Ascending aorta (tissue), 2 donors: ENCODE measurements at regions of chr9 and their contacts with region 1.

Region 1: DNA sequence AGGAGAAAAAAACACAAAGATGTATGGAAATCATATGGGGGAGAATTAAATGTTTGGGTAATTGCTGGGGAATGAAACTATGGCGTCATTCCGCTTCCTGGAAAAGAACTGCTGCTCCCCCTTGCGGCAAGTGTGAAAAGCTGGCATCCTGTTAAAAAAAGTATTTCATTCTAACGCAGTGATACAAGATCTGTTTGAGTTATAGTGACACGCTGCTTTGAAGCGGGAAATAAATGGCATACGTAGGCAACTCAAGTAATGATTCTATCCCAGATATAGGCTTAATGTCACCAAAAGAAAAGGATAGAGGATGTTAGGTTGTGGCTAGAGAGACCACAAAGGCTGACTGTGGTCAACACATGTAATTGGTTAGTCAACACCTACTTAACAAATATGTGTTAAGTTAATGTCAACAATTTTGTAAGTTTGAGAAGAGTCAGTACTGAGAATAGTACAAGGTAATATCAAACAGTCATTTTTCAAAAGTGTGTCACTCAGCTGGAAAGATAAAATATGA is 70.2 kb upstream of the ALDH1A1 start:
- DNase-seq: peak in 1 of 2 donors; percentile 68
- H3K4me3 ChIP-seq: no peak overlapping the region
- H3K27ac ChIP-seq: no peak overlapping the region
- H3K4me1 ChIP-seq: no peaks in the 10 kb centered on the region
- H3K27me3 ChIP-seq: no peaks in the 10 kb centered on the region
- CTCF ChIP-seq: peak; percentile 79 to 86 (median 84)

Region 2: DNA sequence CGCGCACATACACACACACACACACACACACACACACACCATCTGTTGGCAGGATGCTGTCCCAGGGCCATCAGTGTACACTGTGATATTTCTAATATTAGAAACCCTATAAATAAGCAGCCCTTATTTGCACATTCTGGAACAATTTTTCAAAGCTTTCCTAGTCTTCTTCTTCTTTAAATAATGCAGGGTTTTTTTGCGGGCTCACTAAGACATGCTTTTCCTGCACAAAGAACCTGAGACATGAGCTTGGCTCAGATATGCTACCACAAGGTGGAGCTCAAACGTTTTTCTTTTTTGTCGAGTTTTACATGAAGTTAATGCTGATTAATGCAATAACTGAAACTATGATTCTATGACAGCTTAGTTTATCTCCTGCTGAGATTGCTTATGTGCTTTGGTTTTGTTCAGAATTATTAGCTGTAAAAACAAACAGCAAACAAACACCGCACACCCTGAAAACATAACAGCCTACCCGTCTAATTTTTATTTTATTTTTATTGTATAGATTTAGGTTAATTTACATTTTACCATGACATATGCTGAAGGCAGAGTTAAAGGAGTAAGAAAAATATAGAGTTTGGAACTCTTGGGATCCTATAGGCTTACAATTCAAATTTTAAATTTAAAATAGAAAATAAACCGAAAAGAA is 166.0 kb before region 1 on chr9:
- intact Hi-C with region 1: loop called (anchors 1 kb)
- DNase-seq: peak in 1 of 2 donors; percentile 73
- H3K4me3 ChIP-seq: no peak overlapping the region
- H3K27ac ChIP-seq: peak overlapping the region in 1 of 2 donors; percentile 36
- H3K4me1 ChIP-seq: peaks cover 0 to 9% of the 10 kb centered on the region in 2 donors
- H3K27me3 ChIP-seq: no peaks in the 10 kb centered on the region
- CTCF ChIP-seq: peak; percentile 58 to 74 (median 64)

Region 3: DNA sequence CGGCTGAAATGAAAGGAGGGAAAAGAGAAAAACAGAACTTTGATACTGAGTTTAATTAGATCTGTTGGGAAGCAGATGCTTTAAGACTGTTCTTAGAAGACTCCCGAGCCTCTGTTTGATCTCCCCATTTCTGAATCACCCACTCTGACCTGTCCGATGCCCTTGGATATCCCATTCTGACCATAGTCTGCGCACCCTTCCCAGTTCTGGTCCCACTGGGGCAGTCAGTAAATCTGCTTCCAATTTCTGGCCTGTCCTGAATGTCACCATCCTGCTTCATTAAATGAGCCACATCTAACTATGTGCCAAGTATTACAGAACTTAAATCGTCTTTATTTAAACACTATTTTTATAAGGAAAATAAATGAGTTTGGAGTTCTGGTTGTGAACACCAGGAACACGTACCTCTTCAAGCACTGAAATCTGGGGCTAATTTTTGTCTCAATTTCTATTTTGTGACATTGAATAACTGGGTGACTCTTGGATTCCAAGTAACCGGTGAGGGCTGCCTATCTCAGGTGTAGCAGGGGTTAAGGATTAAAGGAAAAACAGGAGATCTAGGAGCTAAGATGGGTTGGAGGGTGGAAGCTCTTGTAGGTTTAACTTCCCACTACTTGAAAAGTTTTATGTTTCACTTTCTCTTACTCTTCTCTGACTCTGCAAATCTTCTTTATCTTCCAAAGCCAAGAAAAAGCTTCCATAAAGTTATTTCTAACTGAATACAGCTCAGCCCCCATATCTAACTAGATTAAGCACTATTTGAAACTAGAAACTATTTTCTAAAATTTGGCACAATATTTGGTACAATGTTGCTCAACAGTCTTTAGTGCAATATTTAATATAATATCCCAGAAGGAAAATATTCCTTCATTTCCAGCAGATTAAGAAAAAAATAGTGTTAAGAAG is 110.4 kb before region 1 on chr9:
- intact Hi-C with region 1: loop called (anchors 2 kb)
- DNase-seq: no peak
- H3K4me3 ChIP-seq: peak overlapping the region in 1 of 2 donors; percentile 48
- H3K27ac ChIP-seq: peak overlapping the region; percentile 65 to 66
- H3K4me1 ChIP-seq: peaks cover 0 to 2% of the 10 kb centered on the region in 2 donors
- H3K27me3 ChIP-seq: no peaks in the 10 kb centered on the region
- CTCF ChIP-seq: no peak

Region 4: DNA sequence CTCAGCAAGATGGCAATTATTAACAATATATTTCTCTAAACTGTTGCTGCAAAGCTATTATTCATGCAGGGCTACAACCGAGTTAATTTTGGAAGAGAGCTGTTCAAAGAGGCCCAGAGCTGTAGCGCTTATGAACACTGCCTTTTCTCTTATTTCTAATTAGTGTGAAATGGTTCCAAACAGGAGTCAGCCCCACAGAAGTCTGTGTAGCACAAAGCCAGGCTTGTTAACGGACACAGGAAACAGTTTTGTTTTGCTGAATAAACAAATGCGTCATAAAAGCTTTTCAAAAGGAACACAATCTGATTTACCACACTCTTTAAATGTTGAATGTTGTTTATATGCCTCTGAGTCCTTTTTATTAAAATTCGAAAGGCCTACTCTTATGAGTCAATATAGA is 525.1 kb after region 1 on chr9:
- intact Hi-C with region 1: no loop called
- DNase-seq: no peak
- H3K4me3 ChIP-seq: no peak overlapping the region
- H3K27ac ChIP-seq: no peak overlapping the region
- H3K4me1 ChIP-seq: no peaks in the 10 kb centered on the region
- H3K27me3 ChIP-seq: no peaks in the 10 kb centered on the region
- CTCF ChIP-seq: no peak